PC-3 (cell line): ENCODE measurements at regions of chr2 and their contacts with region 1.

Region 1: DNA sequence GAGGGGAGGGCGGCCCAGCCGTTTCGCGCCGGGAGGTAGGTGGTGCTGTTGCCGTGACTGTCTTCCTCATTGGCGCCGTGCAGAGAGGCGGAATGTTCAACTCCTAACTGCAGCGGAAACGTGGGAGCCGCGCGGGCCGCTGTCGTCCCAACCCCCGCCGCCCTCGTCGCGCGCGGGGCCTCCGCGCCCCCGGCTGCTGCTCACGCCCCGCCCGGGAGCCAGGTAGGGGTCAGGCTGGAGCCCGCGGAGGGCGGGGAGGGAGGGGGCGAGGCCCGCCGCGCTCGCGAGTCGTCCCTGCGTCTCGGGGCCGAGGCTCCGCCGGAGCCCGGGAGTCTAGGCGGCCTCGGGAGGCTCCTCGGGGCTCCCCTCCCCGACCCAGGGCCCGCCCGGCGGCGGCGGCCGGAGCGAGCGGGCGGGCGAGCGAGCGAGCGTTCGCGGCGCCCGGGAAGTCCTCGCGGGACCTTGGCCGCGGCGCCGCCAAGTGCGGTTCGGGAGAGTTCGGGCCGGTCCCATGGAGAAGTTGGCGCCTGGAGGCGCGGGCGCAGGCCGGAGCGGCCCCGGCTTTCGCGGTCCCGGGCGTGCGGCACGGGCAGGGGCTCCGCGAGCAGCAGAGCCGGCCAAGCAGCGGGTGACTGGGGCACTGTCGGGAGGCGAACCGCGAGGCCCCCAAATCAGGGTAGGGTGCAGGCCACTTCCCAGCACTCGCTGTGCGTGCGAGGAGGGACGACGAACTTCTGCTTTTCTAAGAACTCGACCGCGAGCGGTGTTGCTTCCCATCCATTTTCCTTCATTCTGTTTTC is at the start of gene MAP3K20:
- DNase-seq: peak; percentile 60
- ATAC-seq: peak; percentile 53
- H3K4me3 ChIP-seq: peak within 1 kb of the TSS; percentile 90
- H3K27ac ChIP-seq: peak within 1 kb of the TSS; percentile 86
- H3K4me1 ChIP-seq: peaks cover 38% of the 10 kb centered on the region
- H3K27me3 ChIP-seq: no peaks in the 10 kb centered on the region
- CTCF ChIP-seq: peak; percentile 42
- total RNA-seq, gene MAP3K20: 23.1 and 29.8 TPM in 2 replicates

Region 2: GRCh38 chr2:172864182-172864581 is 211.8 kb before region 1 on chr2:
- CTCF ChIA-PET with region 1: no interaction called
- POLR2A ChIA-PET with region 1: no interaction called
- intact Hi-C with region 1: no loop called
- DNase-seq: peak; percentile 72
- ATAC-seq: peak; percentile 55
- H3K4me3 ChIP-seq: no peak overlapping the region
- H3K27ac ChIP-seq: no peak overlapping the region
- H3K4me1 ChIP-seq: peaks cover 14% of the 10 kb centered on the region
- H3K27me3 ChIP-seq: no peaks in the 10 kb centered on the region
- CTCF ChIP-seq: peak; percentile 83

Region 3: GRCh38 chr2:173048897-173049661 is 26.9 kb before region 1 on chr2:
- CTCF ChIA-PET with region 1: interaction called, 3 read pairs
- POLR2A ChIA-PET with region 1: no interaction called
- intact Hi-C with region 1: loop called (anchors 1 kb)
- DNase-seq: peak; percentile 97
- ATAC-seq: peak; percentile 88
- H3K4me3 ChIP-seq: peak overlapping the region; percentile 31; the same call in 1 of the 2 replicates
- H3K27ac ChIP-seq: peak overlapping the region; percentile 92
- H3K4me1 ChIP-seq: peaks cover 68% of the 10 kb centered on the region
- H3K27me3 ChIP-seq: no peaks in the 10 kb centered on the region
- CTCF ChIP-seq: no peak

Region 4: DNA sequence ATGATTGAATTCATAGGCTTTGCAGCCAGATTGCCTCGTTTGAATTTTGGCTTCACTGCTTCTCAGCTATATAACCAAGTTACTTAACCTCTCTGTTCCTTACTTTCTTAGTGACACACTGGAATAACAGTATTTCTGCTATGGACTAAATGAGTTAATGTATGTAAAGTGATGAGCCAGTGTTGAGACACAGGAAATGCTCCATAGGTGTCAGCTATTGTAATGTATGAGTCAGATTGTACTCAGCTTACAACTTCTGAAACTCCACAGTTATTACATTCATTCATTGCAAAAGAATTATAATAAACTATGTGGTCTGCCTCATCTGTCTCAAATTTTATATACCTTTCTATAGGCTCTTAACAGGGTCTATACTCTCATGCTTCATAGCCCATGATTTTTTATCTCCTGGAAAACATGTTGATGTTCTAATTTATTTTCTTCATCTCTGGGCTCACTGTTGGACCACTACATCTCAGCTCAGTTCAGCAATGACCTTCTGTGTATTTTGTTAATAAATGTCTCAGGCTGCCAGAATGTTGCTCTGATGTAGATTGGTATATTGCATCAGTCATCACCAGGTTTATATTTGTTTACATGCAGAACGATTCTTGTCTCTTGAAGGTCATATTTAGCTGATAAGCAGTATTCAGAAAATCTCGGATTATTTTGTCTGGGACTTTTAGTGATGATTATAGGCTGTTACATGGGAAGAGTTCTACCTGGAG is 75.9 kb after region 1 on chr2:
- CTCF ChIA-PET with region 1: no interaction called
- POLR2A ChIA-PET with region 1: interaction called, 4 read pairs
- intact Hi-C with region 1: loop called (anchors 1 kb)
- DNase-seq: peak; percentile 94
- ATAC-seq: peak; percentile 85
- H3K4me3 ChIP-seq: peak overlapping the region; percentile 23; the same call in 1 of the 2 replicates
- H3K27ac ChIP-seq: peak overlapping the region; percentile 86
- H3K4me1 ChIP-seq: peaks cover 58% of the 10 kb centered on the region
- H3K27me3 ChIP-seq: no peaks in the 10 kb centered on the region
- CTCF ChIP-seq: no peak